ENCODE measurements at regions of chr20 and their contacts with region 1.

Region 1: DNA sequence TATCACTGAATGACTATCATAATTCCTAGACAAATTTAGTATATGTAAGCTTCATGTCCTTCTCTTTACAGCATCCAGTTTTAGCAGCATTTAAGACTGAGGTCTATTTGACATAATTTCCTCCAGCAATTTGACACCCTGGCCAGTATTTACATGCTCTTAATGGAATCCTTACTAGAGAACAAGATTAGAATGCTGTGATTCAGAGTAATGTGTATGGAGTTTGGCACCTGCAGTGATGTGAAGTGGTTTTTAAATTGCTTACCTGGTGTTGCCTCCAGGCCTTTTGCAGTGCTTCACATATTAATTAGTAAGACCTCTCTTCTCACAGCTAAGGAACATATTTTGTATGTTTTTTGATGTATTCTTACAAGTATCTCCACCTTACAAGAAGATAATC is 9.8 kb downstream of the NKX2-4 start:
- DNase-seq: no peak
- ATAC-seq: no peak
- H3K4me3 ChIP-seq: no peak overlapping the region
- H3K27ac ChIP-seq: no peak overlapping the region
- H3K4me1 ChIP-seq: peaks cover 2% of the 10 kb centered on the region; the same call in 1 of the 2 replicates
- H3K27me3 ChIP-seq: peaks cover 15% of the 10 kb centered on the region
- CTCF ChIP-seq: no peak
- POLR2A ChIP-seq: no peak
- RAD21 ChIP-seq: no peak

Region 2: GRCh38 chr20:21371193-21371592 is 16.3 kb before region 1 on chr20:
- CTCF ChIA-PET with region 1: no interaction called
- POLR2A ChIA-PET with region 1: no interaction called
- dilution Hi-C with region 1: no loop called
- in situ Hi-C with region 1: no loop called
- intact Hi-C with region 1: loop called (anchors 2 kb)
- DNase-seq: no peak
- ATAC-seq: no peak
- H3K4me3 ChIP-seq: no peak overlapping the region
- H3K27ac ChIP-seq: no peak overlapping the region; the same call in 1 of the 2 replicates
- H3K4me1 ChIP-seq: 0 out of 2 replicates have a peak, but pooled peaks cover 4% of the 10 kb centered on the region
- H3K27me3 ChIP-seq: no peaks in the 10 kb centered on the region
- CTCF ChIP-seq: no peak
- POLR2A ChIP-seq: no peak
- RAD21 ChIP-seq: no peak

Region 3: DNA sequence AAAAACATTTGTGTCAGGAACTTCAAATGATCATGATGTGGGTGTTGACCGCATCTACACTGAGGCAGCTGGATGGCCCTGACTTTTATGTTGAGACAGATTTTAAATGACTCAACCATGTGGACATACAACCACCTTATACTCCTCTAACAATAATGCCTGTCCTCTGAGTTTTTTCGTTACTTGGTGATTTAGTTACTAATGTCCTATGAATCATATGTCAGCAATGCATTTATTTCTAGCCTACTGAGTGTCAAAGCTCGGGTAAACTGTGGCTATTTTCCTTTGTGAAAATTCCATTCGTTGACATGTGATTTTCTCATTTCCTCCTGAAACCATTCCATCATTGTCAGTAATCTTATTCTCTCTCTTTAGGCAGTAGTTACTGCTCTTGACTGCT is 48.7 kb after region 1 on chr20:
- CTCF ChIA-PET with region 1: no interaction called
- POLR2A ChIA-PET with region 1: no interaction called
- dilution Hi-C with region 1: no loop called
- in situ Hi-C with region 1: no loop called
- intact Hi-C with region 1: no loop called
- DNase-seq: peak; percentile 72
- ATAC-seq: peak; percentile 67
- H3K4me3 ChIP-seq: no peak overlapping the region
- H3K27ac ChIP-seq: no peak overlapping the region
- H3K4me1 ChIP-seq: no peaks in the 10 kb centered on the region
- H3K27me3 ChIP-seq: no peaks in the 10 kb centered on the region; the same call in 1 of the 2 replicates
- CTCF ChIP-seq: no peak
- POLR2A ChIP-seq: no peak
- RAD21 ChIP-seq: no peak